ENCODE measurements at regions of chr7 and their contacts with region 1.

Region 1: DNA sequence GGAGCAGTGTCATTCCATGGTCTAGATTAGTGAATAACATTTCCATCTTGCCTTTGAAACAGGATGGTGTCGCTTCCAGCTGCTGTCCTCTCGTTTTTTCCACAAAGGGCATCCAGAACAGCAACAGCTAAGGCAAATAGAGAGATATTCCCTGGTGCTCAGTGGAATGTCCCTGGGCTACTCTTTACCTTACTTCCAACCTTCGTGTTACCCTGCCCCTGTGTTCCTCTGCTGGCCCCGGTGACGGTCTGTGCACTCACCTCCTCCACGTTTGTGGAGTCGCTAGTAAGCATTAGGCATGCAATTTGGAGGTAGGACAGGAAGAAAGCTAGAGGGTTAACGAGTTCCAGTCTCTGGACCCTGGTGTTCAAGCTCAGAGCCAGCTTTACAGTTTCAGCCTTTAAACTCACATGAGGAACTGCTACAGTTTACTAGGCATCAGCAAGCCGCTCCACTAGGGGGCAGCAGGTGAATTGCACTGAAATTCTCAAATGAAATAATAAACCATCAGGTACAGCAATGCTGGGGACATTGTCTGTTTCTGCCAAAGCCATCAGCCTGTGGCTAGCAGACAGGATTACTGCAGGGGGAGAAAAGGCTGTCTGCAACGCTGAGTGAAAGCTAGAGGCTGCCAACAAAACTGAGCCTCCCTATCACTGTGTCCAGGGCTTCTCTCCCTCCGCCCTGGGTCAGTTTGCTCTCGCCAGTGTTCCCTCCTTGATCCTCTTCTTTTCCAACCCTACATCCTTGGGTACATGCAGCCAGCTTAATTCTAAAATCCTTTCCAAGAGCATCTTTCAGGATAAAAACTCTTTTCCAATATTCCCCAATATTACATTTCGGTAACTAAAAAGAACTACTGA is 9.0 kb downstream of the MRPL32 start:
- DNase-seq: peak; percentile 75 to 93 (median 84)
- ATAC-seq: peak; percentile 50 to 71
- H3K4me3 ChIP-seq: no peak overlapping the region
- H3K27ac ChIP-seq: no peak overlapping the region
- H3K4me1 ChIP-seq: no peaks in the 10 kb centered on the region
- H3K27me3 ChIP-seq: no peaks in the 10 kb centered on the region

Region 2: DNA sequence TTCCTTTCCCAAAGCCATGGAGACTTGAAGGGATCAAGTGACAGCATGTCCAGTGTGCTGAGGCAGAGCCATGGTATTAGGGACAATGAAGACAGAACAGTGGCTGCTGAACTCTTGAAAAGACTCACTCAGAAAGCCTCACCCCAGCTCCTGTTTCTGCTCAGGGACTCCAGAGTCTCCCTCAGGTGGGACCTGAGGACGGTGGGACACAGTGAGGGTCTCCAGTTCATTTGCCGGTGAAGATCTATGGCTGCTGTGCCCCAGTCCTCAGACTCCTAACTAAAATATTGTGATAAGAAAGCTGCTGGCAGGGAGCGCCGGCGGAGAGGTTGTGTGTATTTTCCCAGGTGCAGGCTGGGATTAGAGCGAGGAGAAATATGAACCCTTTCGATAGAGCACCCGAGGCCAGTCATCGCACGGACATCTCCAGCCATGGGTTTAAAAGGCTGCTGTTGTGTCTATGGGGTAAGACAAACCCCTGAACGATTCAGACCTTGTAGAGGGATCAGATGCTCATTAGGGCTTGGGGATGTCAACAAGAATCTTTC is 86.6 kb before region 1 on chr7:
- intact Hi-C with region 1: no loop called
- DNase-seq: no peak
- ATAC-seq: no peak
- H3K4me3 ChIP-seq: no peak overlapping the region
- H3K27ac ChIP-seq: no peak overlapping the region
- H3K4me1 ChIP-seq: no peaks in the 10 kb centered on the region
- H3K27me3 ChIP-seq: no peaks in the 10 kb centered on the region

Region 3: DNA sequence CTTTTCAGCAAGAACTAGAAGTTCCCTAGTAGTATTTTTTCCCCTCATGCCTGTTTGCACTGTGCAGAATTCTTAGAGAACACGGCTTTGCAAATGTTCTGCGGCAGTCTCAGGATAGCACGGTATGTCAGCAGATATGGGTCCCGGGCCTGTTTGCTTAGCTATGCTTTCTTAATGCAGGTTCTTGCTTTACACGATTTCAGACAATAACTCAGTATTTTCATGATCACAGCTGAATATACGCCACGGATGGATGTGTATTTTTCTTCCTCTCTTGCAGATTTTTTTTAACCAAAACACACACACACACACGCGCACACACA is 308.6 kb after region 1 on chr7:
- intact Hi-C with region 1: loop called in 1 of 4 experiments (anchors 10 kb)
- DNase-seq: no peak
- ATAC-seq: no peak
- H3K4me3 ChIP-seq: no peak overlapping the region
- H3K27ac ChIP-seq: no peak overlapping the region
- H3K4me1 ChIP-seq: no peaks in the 10 kb centered on the region
- H3K27me3 ChIP-seq: no peaks in the 10 kb centered on the region

Region 4: DNA sequence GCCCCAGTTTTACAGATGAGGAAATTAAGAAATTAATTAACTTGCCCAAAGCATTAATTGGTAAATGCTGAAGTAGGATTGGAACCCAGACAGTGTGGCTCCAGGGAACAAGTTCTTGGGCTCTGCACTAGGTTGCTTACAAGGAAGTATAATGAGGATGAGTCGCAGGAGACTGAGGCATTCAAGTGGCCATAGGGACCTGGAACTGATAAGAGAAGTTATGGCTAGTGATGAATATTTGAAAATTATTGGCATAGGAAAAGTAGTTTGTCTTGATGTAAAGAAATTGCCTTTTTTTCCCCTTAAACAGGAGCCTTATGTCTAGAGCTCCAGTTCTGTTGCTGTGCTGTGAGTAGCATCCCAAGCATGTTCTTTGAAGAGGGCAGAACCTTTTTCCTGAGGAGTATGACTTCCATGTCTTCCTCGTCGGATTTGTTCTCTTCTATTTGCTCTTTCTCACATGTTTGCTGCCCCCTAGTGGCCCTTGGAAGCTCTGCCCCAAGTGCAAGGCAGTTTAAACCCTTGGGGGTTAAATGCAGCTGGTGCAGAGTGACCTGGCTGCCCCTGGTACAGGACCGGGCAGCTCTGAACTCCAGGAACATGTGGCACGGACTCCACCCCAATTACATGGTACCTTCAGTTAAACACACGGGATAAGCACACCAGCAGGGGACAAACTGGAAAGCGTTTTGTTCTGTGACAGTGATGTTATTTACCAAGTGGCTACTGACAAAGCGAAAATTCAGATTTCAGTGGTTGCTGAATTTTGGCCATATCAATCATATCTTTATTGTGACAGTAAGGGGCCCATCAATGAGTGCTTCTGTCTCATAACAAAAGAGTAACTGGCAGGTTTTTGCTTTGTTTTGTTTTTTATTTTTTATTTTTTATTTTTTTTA is 320.0 kb after region 1 on chr7:
- intact Hi-C with region 1: loop called (anchors 5 to 10 kb)
- DNase-seq: peak; percentile 64 to 83 (median 76)
- ATAC-seq: peak; percentile 59 to 66
- H3K4me3 ChIP-seq: no peak overlapping the region
- H3K27ac ChIP-seq: no peak overlapping the region
- H3K4me1 ChIP-seq: no peaks in the 10 kb centered on the region
- H3K27me3 ChIP-seq: peaks cover 2% of the 10 kb centered on the region

Region 5: GRCh38 chr7:43454936-43455518 is 513.8 kb after region 1 on chr7:
- intact Hi-C with region 1: loop called in 1 of 4 experiments (anchors 10 kb)
- DNase-seq: no peak
- ATAC-seq: peak in 1 of 2 donors; percentile 48
- H3K4me3 ChIP-seq: no peak overlapping the region
- H3K27ac ChIP-seq: no peak overlapping the region
- H3K4me1 ChIP-seq: no peaks in the 10 kb centered on the region
- H3K27me3 ChIP-seq: no peaks in the 10 kb centered on the region

Region 6: GRCh38 chr7:43834463-43835251 is 893.4 kb after region 1 on chr7:
- intact Hi-C with region 1: loop called in 1 of 4 experiments (anchors 10 kb)
- DNase-seq: no peak
- ATAC-seq: peak in 1 of 2 donors; percentile 15
- H3K4me3 ChIP-seq: no peak overlapping the region
- H3K27ac ChIP-seq: no peak overlapping the region
- H3K4me1 ChIP-seq: no peaks in the 10 kb centered on the region
- H3K27me3 ChIP-seq: no peaks in the 10 kb centered on the region